ENCODE measurements at regions of chr18 and their contacts with region 1.

Region 1: DNA sequence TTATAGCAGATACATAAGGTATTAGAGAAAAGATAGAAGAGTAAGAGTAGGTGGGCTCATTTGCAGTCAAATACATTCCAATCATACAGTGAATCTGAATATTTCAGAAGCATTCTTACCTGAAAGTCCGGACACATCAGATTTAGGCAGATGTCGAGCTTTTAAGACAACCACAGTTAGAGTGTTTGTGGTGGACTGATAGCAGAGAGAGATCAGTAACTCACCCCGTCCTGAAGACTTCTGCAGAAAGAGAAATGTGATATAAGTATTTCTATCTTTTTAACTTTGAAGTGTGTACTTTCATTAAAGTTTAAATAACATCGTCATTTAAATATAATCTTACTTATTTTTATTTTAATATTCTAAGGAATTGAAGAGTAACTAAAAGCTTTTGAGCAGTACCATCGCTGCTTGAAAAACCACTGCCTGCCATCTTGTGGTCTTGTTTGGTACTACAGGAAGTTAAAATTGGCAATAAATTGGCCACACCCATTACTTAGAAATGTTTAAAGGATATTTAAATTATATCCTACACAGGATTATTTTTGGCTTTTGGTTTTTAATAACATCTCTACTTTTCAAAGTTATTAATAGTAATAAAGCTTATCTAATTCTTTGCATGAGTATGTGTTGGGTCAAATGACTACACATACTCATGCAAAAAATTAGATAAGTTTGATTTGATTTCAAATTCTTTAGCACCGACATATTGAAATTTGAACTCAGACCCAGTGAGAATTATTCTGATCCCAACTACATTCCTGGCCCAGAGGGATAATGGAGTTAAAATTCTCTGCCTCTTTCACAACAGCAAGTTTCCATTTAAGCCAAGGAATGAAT is 5.5 kb downstream of the SYT4 start:
- DNase-seq: no peak
- ATAC-seq: no peak
- H3K4me3 ChIP-seq: no peak overlapping the region
- H3K27ac ChIP-seq: no peak overlapping the region
- H3K4me1 ChIP-seq: no peaks in the 10 kb centered on the region
- H3K27me3 ChIP-seq: no peaks in the 10 kb centered on the region
- CTCF ChIP-seq: peak; percentile 34 to 66 (median 48)
- POLR2A ChIP-seq: no peak

Region 2: GRCh38 chr18:42114310-42114943 is 1157.4 kb before region 1 on chr18:
- in situ Hi-C with region 1: loop called in 2 of 4 experiments (anchors 25 kb)
- intact Hi-C with region 1: no loop called
- DNase-seq: peak; percentile 11 to 30
- ATAC-seq: peak; percentile 77 to 79
- H3K4me3 ChIP-seq: peak overlapping the region in 2 of 4 donors; percentile 18 to 39
- H3K27ac ChIP-seq: no peak overlapping the region
- H3K4me1 ChIP-seq: peaks cover 0 to 8% of the 10 kb centered on the region in 2 donors
- H3K27me3 ChIP-seq: no peaks in the 10 kb centered on the region
- CTCF ChIP-seq: peak; percentile 50 to 87 (median 65)
- POLR2A ChIP-seq: no peak

Region 3: GRCh38 chr18:42141439-42141838 is 1130.4 kb before region 1 on chr18:
- in situ Hi-C with region 1: loop called in 1 of 4 experiments (anchors 25 kb)
- intact Hi-C with region 1: no loop called
- DNase-seq: no peak
- ATAC-seq: no peak
- H3K4me3 ChIP-seq: no peak overlapping the region
- H3K27ac ChIP-seq: no peak overlapping the region
- H3K4me1 ChIP-seq: no peaks in the 10 kb centered on the region
- H3K27me3 ChIP-seq: no peaks in the 10 kb centered on the region
- CTCF ChIP-seq: no peak
- POLR2A ChIP-seq: no peak

Region 4: DNA sequence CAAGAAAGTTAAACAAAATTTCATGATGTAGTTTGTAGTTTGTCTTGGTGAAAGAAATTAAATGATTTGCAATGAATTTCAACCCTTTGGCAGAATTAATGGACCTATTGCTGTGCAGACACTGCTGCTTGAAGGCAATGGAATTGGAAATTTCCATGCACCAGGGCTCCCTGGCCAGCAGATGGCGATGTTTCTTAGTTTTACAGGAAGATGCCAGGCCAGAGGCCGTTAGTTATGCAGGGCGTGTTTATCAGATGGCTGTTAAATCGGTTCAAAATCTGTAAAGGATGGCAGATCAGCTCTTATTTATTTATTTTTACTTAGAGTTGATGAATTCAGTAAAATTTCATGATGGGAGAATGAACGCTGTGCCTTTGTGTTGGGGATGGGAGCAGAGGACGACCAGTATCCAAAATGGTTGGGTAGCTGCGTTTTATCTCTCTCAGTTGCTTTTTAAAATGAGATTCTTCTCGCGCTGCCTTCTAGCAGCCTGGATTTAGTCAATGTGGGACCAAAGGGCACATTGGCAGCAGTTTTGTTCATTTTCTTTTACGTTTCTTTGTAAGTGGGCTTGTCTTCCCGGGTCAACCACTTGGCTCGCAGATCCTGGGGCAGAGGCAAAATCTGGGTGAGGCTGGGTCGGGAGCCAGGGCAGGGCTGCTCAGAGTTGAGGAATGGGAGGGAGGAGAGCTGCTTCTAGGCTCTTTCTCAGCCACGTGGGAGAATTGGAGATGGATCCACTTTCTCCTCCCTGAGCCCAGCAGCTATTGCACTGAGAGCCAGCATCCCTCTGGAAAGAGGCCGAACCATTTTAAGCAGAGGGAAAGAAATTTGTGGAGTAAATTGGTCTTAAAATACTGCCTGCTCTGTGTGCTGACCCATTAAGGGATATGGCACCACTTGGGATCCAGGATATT is 972.8 kb before region 1 on chr18:
- in situ Hi-C with region 1: loop called in 2 of 4 experiments (anchors 25 kb)
- intact Hi-C with region 1: loop called (anchors 5 kb)
- DNase-seq: peak; percentile 46 to 53
- ATAC-seq: peak; percentile 73
- H3K4me3 ChIP-seq: peak overlapping the region in 3 of 4 donors; percentile 25 to 38 (median 26)
- H3K27ac ChIP-seq: peak overlapping the region in 1 of 4 donors; percentile 35
- H3K4me1 ChIP-seq: no peaks in the 10 kb centered on the region
- H3K27me3 ChIP-seq: no peaks in the 10 kb centered on the region
- CTCF ChIP-seq: peak; percentile 53 to 78 (median 68)
- POLR2A ChIP-seq: no peak

Region 5: GRCh38 chr18:42310956-42311355 is 960.9 kb before region 1 on chr18:
- in situ Hi-C with region 1: loop called in 1 of 4 experiments (anchors 25 kb)
- intact Hi-C with region 1: no loop called
- DNase-seq: peak; percentile 29 to 64
- ATAC-seq: peak; percentile 75 to 76
- H3K4me3 ChIP-seq: no peak overlapping the region
- H3K27ac ChIP-seq: no peak overlapping the region
- H3K4me1 ChIP-seq: no peaks in the 10 kb centered on the region
- H3K27me3 ChIP-seq: no peaks in the 10 kb centered on the region
- CTCF ChIP-seq: no peak
- POLR2A ChIP-seq: no peak

Region 6: DNA sequence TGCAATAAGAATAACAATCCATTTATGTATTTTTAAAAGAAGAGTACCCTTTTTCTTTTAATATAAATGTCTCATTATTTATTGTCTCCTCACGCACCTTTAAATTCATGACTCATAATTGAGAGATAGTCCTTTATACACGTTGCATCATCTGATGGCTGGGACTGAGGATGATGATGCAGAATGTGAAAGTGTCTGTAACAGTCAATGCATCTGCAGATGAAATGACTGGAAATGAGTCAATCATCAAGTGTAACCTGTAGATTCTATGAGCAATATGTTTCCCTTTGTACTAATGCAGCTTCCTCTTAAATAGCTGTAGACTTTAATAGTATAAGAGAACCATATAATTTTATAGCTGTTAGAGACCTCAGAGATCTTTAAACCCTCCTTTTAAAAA is 31.6 kb after region 1 on chr18:
- in situ Hi-C with region 1: no loop called
- intact Hi-C with region 1: no loop called
- DNase-seq: no peak
- ATAC-seq: no peak
- H3K4me3 ChIP-seq: no peak overlapping the region
- H3K27ac ChIP-seq: no peak overlapping the region
- H3K4me1 ChIP-seq: no peaks in the 10 kb centered on the region
- H3K27me3 ChIP-seq: no peaks in the 10 kb centered on the region
- CTCF ChIP-seq: no peak
- POLR2A ChIP-seq: no peak